Activated CD4-positive, alpha-beta T cell treated with anti-CD3 and anti-CD28 coated beads for 36 hours (primary cell): ENCODE measurements at regions of chr12 and their contacts with region 1.

Region 1: GRCh38 chr12:27523642-27524493 is at the start of gene PPFIBP1:
- DNase-seq: peak; percentile 98
- ATAC-seq: peak; percentile 99
- H3K4me3 Mint-ChIP-seq: peak within 1 kb of the TSS; percentile 91
- H3K27ac Mint-ChIP-seq: peak within 1 kb of the TSS; percentile 87
- H3K4me1 Mint-ChIP-seq: peaks cover 19% of the 10 kb centered on the region
- H3K27me3 Mint-ChIP-seq: peaks cover 19% of the 10 kb centered on the region
- total RNA-seq, gene PPFIBP1: 14.9 to 15.6 TPM

Region 2: GRCh38 chr12:27332407-27333301 is 191.2 kb before region 1 on chr12 and contains the start of gene BMAL2:
- CTCF ChIA-PET with region 1: no interaction called
- POLR2A ChIA-PET with region 1: no interaction called
- intact Hi-C with region 1: loop called in 1 of 2 experiments (anchors 5 kb)
- DNase-seq: peak; percentile 66
- ATAC-seq: peak; percentile 28
- H3K4me3 Mint-ChIP-seq: peak within 1 kb of the TSS; percentile 82
- H3K27ac Mint-ChIP-seq: peak within 1 kb of the TSS; percentile 90
- H3K4me1 Mint-ChIP-seq: peaks cover 42% of the 10 kb centered on the region
- H3K27me3 Mint-ChIP-seq: peaks cover 30% of the 10 kb centered on the region
- total RNA-seq, gene BMAL2: 10.9 to 13.2 TPM

Region 3: GRCh38 chr12:27498149-27498548 is 25.7 kb before region 1 on chr12:
- CTCF ChIA-PET with region 1: interaction called, 3 read pairs
- POLR2A ChIA-PET with region 1: no interaction called
- intact Hi-C with region 1: loop called in 1 of 2 experiments (anchors 2 kb)
- DNase-seq: peak; percentile 13
- ATAC-seq: peak; percentile 93
- H3K4me3 Mint-ChIP-seq: no peak overlapping the region
- H3K27ac Mint-ChIP-seq: no peak overlapping the region
- H3K4me1 Mint-ChIP-seq: peaks cover 26% of the 10 kb centered on the region
- H3K27me3 Mint-ChIP-seq: peaks cover 46% of the 10 kb centered on the region

Region 4: GRCh38 chr12:27627123-27627835 is 103.4 kb after region 1 on chr12:
- CTCF ChIA-PET with region 1: no interaction called
- POLR2A ChIA-PET with region 1: no interaction called
- intact Hi-C with region 1: loop called in 1 of 2 experiments (anchors 5 kb)
- DNase-seq: no peak
- ATAC-seq: peak; percentile 57
- H3K4me3 Mint-ChIP-seq: no peak overlapping the region
- H3K27ac Mint-ChIP-seq: no peak overlapping the region
- H3K4me1 Mint-ChIP-seq: peaks cover 13% of the 10 kb centered on the region
- H3K27me3 Mint-ChIP-seq: no peaks in the 10 kb centered on the region

Region 5: GRCh38 chr12:27710592-27711316 is 186.9 kb after region 1 on chr12 and contains the start of gene MRPS35:
- CTCF ChIA-PET with region 1: no interaction called
- POLR2A ChIA-PET with region 1: no interaction called
- intact Hi-C with region 1: loop called (anchors 2 to 5 kb)
- DNase-seq: peak; percentile 95
- ATAC-seq: peak; percentile 98
- H3K4me3 Mint-ChIP-seq: peak within 1 kb of the TSS; percentile 94
- H3K27ac Mint-ChIP-seq: peak within 1 kb of the TSS; percentile 94
- H3K4me1 Mint-ChIP-seq: peaks cover 28% of the 10 kb centered on the region
- H3K27me3 Mint-ChIP-seq: no peaks in the 10 kb centered on the region
- total RNA-seq, gene MRPS35: 58.5 to 62.1 TPM